ENCODE measurements at regions of chrX and their contacts with region 1.

Region 1: GRCh38 chrX:119228512-119229252 is 7.4 kb upstream of the PGRMC1 start:
- DNase-seq: no peak
- H3K4me3 ChIP-seq: no peak overlapping the region
- H3K27ac ChIP-seq: no peak overlapping the region
- H3K4me1 ChIP-seq: no peaks in the 10 kb centered on the region
- H3K27me3 ChIP-seq: no peaks in the 10 kb centered on the region
- CTCF ChIP-seq: no peak
- EP300 ChIP-seq: no peak
- POLR2A ChIP-seq: no peak

Region 2: GRCh38 chrX:118839334-118839958 is 389.2 kb before region 1 on chrX:
- intact Hi-C with region 1: loop called in 2 of 4 experiments (anchors 5 to 10 kb)
- DNase-seq: peak; percentile 66 to 82 (median 77)
- H3K4me3 ChIP-seq: peak overlapping the region; percentile 36
- H3K27ac ChIP-seq: no peak overlapping the region
- H3K4me1 ChIP-seq: no peaks in the 10 kb centered on the region
- H3K27me3 ChIP-seq: no peaks in the 10 kb centered on the region
- CTCF ChIP-seq: peak; percentile 41 to 56 (median 49)
- EP300 ChIP-seq: no peak
- POLR2A ChIP-seq: no peak

Region 3: DNA sequence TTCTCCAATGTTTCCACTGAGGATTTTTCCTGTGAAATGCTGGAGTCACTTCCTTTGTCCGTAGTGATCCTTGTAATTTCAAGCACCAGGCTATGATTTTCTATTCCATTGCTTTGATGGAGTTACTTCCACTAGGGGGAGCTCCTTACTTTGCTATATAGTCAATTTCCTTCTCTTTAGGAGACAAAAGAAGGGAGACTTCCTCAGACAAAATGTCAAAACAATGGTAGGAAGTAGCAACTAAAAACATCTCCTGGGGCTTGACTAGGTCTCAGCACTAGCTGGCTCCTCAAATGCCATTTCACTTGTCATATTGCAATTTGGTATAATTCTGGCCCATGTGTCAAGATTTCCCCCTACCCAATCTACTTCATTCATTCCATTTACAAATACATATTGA is 381.0 kb before region 1 on chrX:
- intact Hi-C with region 1: loop called in 1 of 4 experiments (anchors 10 kb)
- DNase-seq: no peak
- H3K4me3 ChIP-seq: no peak overlapping the region
- H3K27ac ChIP-seq: no peak overlapping the region
- H3K4me1 ChIP-seq: no peaks in the 10 kb centered on the region
- H3K27me3 ChIP-seq: no peaks in the 10 kb centered on the region
- CTCF ChIP-seq: peak in 2 of 3 donors; percentile 29 to 49
- EP300 ChIP-seq: no peak
- POLR2A ChIP-seq: no peak

Measured in ovary (tissue), 10 donors.